MCF 10A (cell line): ENCODE measurements at regions of chr9 and their contacts with region 1.

Region 1: DNA sequence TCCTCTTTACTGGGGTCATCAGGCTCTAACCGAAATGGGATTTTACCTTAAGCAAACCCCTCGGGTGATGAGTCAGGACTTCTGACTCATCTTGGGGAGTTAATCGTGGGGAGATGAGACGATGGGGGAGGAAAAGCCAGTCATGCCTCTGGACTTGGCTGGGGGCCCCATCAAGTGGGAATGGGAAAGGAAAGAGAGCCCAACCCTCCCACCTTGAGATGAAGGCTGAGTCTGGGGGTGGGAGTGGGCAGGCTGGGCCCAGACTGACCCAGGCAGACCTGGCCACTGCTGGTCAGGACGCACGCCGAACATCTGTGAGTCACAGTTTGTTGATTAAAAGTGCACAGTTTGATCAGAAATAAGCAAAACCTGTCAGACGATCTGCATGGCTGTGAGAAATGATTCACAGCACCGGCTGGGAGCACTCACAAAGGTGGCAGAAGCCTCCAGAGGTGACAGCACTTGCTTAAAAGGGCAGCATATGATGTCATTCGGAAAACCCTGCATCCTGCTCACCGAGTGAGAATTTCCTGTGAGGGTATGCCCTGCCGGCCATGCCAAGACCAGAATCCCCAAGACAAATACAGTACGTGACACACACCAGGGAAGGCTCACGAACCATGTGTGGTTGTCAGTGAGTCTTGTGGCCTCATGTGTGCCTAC is 50.0 kb upstream of the SLC25A51 start:
- DNase-seq: peak; percentile 95
- H3K4me3 Mint-ChIP-seq: peak overlapping the region; percentile 52
- H3K27ac Mint-ChIP-seq: peak overlapping the region; percentile 84
- H3K4me1 Mint-ChIP-seq: peaks cover 35% of the 10 kb centered on the region
- H3K27me3 Mint-ChIP-seq: no peaks in the 10 kb centered on the region
- CTCF ChIP-seq: no peak

Region 2: DNA sequence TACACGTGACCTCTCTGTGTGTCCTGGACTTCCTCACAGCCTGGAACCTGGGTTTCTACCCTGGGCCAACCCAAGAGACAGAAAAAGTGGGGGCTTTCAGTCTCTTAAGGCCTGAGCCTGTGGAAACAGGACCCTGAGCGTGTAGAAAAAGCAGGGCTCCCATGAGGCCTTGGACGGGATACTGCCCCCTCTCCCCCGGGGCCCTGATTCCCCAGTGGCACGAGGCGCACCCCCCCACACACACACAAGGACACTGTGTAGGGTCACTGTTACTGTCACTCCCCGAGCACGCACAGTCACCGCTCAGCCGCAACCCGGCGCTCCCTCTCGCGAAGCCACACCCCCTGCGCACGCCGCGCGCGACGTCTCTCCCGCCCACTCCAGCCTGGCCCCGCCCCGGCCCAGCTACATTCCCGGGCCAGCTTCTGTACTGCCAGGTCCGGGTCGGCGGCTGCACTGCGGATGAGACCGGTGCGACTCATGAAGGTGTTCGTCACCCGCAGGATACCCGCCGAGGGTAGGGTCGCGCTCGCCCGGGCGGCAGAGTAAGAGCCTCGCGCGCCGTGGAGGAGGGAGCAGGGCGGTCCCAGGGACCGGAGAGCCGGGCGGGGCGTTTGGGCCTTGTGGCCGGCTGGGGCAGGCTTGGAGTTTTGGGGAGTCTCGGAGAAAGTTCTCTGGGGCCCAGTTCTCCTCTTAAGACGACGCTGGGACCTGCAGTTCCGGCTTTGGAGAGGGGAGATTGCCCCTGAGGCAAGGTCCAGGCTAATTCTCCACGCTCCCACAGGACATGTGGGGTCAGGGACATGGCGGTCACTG is 531.4 kb before region 1 on chr9 and contains the start of gene GRHPR:
- CTCF ChIA-PET with region 1: no interaction called
- POLR2A ChIA-PET with region 1: no interaction called
- intact Hi-C with region 1: no loop called
- DNase-seq: peak; percentile 75
- H3K4me3 Mint-ChIP-seq: peak within 1 kb of the TSS; percentile 92
- H3K27ac Mint-ChIP-seq: peak within 1 kb of the TSS; percentile 96
- H3K4me1 Mint-ChIP-seq: peaks cover 26% of the 10 kb centered on the region
- H3K27me3 Mint-ChIP-seq: no peaks in the 10 kb centered on the region
- CTCF ChIP-seq: no peak
- total RNA-seq, gene GRHPR: 114 and 121 TPM in 2 replicates

Region 3: DNA sequence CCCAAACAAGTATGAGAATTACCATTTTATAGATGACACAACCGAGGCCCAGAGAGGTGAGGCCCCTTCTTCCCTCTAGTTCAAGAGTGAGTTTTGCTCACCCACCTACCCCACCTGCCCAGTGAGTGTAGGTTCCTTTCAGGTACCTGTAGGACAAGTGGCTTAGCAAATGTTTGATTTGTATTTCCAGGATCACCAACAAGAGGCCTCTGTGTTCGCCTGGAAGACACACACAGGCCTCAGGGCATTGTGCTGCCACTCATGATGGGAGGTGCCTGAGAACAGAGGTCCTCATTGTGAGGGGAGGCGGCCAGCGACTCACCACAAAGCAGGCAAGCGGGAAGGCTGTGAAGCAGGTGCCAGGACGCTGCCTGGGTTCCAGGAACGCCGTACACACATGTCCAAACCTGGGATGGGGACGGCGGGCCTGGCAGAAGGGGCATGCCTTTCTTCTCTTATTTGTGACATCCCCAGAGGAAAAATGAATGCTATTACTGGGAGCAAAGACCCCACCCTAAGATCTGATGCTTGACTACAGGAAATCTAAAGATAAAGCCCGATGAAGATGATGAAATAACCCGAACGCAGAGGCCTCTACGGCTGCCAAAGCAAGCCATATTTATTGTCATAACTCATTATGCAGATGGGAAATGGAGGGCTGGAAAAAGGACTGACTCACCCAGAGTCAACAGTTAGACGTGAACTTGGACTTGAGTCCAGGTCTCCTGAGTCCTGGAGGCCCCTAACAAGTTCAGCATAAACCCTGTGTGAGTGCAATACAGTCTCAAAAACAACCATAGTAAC is 10.2 kb after region 1 on chr9:
- CTCF ChIA-PET with region 1: interaction called, 5 read pairs
- POLR2A ChIA-PET with region 1: interaction called, 3 read pairs
- intact Hi-C with region 1: loop called (anchors 2 kb)
- DNase-seq: peak; percentile 89
- H3K4me3 Mint-ChIP-seq: no peak overlapping the region
- H3K27ac Mint-ChIP-seq: peak overlapping the region; percentile 92
- H3K4me1 Mint-ChIP-seq: peaks cover 50% of the 10 kb centered on the region
- H3K27me3 Mint-ChIP-seq: no peaks in the 10 kb centered on the region
- CTCF ChIP-seq: no peak